ENCODE measurements at regions of chr12 and their contacts with region 1.

Region 1: DNA sequence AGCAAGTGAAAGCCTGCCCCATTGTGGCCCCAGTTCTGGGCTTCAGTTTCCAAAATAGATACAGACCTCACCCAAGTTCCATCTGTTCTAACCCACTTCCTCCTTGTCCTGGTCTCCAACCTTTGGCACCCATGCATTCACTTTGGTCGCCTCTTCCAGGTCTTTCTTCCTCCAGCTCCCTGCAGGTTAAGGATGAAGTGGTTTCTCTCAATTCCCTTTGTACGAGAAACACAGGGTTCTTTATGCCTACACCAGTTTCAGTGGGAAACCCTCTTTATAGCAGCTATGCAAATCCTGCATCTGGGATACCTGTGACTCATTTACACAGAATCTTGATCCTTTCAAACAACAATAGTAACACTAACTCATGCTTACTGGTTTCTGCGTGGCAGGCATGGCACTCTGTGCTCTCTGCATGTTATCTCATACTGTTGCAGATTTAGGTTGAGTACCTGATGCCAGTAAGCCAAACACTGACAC is 110.6 kb upstream of the AMIGO2 start:
- DNase-seq: no peak
- H3K4me3 ChIP-seq: peak overlapping the region; percentile 11
- H3K4me3 Mint-ChIP-seq: peak overlapping the region; percentile 12 to 90 (median 59)
- H3K27ac ChIP-seq: no peak overlapping the region
- H3K27ac Mint-ChIP-seq: peak overlapping the region; percentile 93 to 97 (median 96)
- H3K4me1 ChIP-seq: peaks cover 81% of the 10 kb centered on the region
- H3K4me1 Mint-ChIP-seq: peaks cover 78 to 92% (median 89%) of the 10 kb centered on the region in 3 donors
- H3K27me3 ChIP-seq: no peaks in the 10 kb centered on the region
- H3K27me3 Mint-ChIP-seq: peaks cover 0 to 2% of the 10 kb centered on the region in 2 donors

Region 2: DNA sequence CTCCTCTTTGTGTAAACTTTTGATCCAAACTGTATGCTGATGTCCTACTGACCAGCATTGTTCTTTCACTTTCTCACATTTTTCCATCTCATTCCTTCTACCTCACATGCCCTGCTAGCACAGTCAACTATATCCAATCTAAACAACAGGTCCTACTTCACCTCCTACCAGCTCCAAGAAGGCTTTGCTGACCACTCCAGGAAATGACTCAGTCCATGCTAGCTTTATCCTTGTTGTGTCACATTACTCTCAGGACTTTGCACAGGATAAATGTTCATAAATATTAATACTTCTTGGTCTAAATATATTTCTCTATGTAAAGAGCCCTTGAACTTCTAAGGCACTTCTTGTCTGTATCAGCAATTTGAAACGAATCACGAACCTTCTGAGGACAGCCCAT is 175.8 kb before region 1 on chr12:
- CTCF ChIA-PET with region 1: no interaction called
- POLR2A ChIA-PET with region 1: no interaction called
- DNase-seq: no peak
- H3K4me3 ChIP-seq: no peak overlapping the region
- H3K4me3 Mint-ChIP-seq: no peak overlapping the region
- H3K27ac ChIP-seq: no peak overlapping the region
- H3K27ac Mint-ChIP-seq: no peak overlapping the region
- H3K4me1 ChIP-seq: no peaks in the 10 kb centered on the region
- H3K4me1 Mint-ChIP-seq: no peaks in the 10 kb centered on the region
- H3K27me3 ChIP-seq: peaks cover 6% of the 10 kb centered on the region
- H3K27me3 Mint-ChIP-seq: peaks cover 13 to 56% of the 10 kb centered on the region in 2 donors

Region 3: GRCh38 chr12:47054659-47055058 is 135.7 kb before region 1 on chr12:
- CTCF ChIA-PET with region 1: no interaction called
- POLR2A ChIA-PET with region 1: no interaction called
- DNase-seq: no peak
- H3K4me3 ChIP-seq: no peak overlapping the region
- H3K4me3 Mint-ChIP-seq: no peak overlapping the region
- H3K27ac ChIP-seq: no peak overlapping the region
- H3K27ac Mint-ChIP-seq: no peak overlapping the region
- H3K4me1 ChIP-seq: no peaks in the 10 kb centered on the region
- H3K4me1 Mint-ChIP-seq: no peaks in the 10 kb centered on the region
- H3K27me3 ChIP-seq: no peaks in the 10 kb centered on the region
- H3K27me3 Mint-ChIP-seq: peaks cover 0 to 14% of the 10 kb centered on the region in 2 donors

Region 4: DNA sequence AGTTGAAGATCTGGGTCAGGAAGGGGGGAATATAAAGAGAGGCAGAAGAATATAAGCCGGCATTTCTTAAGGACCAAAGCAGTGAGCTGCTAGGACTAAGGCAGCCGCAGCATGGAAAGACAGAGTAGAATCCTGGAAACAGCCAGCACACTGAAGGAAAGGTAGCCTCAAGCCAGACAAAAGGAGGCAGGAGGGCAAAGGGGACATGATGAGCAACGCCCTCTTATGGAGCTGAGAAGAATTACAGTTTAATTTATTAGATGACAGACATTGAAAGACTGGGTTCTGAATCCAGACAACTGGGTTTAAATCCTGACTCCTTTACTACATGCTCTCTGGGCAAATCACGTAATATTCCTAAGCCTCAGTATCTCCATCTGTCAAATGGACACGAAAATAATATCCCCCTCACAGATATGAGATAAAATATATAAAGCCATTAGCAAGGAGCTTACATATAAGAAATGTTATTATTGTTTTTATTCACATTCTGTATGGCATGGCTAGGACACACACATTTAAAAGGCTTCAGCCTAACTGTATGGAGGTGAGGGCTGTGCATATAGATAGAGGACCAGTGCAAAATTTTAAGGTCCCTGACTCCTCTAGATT is 119.0 kb before region 1 on chr12:
- CTCF ChIA-PET with region 1: interaction called, 14 read pairs
- POLR2A ChIA-PET with region 1: interaction called, 6 read pairs
- DNase-seq: peak in 1 of 5 donors; percentile 31
- H3K4me3 ChIP-seq: no peak overlapping the region
- H3K4me3 Mint-ChIP-seq: no peak overlapping the region
- H3K27ac ChIP-seq: no peak overlapping the region
- H3K27ac Mint-ChIP-seq: peak overlapping the region in 1 of 8 donors; percentile 53
- H3K4me1 ChIP-seq: peaks cover under 1% of the 10 kb centered on the region
- H3K4me1 Mint-ChIP-seq: peaks cover 5 to 10% (median 10%) of the 10 kb centered on the region in 3 donors
- H3K27me3 ChIP-seq: no peaks in the 10 kb centered on the region
- H3K27me3 Mint-ChIP-seq: no peaks in the 10 kb centered on the region

Region 5: GRCh38 chr12:47207340-47207717 is 17.0 kb after region 1 on chr12:
- CTCF ChIA-PET with region 1: interaction called, 31 read pairs
- POLR2A ChIA-PET with region 1: interaction called, 12 read pairs
- DNase-seq: peak; percentile 34 to 60 (median 50)
- H3K4me3 ChIP-seq: peak overlapping the region; percentile 44
- H3K4me3 Mint-ChIP-seq: peak overlapping the region; percentile 58 to 95 (median 78)
- H3K27ac ChIP-seq: peak overlapping the region; percentile 21
- H3K27ac Mint-ChIP-seq: peak overlapping the region; percentile 86 to 98 (median 94)
- H3K4me1 ChIP-seq: peaks cover 67% of the 10 kb centered on the region
- H3K4me1 Mint-ChIP-seq: peaks cover 77 to 90% (median 84%) of the 10 kb centered on the region in 3 donors
- H3K27me3 ChIP-seq: no peaks in the 10 kb centered on the region
- H3K27me3 Mint-ChIP-seq: peaks cover 0 to 2% of the 10 kb centered on the region in 2 donors

Region 6: DNA sequence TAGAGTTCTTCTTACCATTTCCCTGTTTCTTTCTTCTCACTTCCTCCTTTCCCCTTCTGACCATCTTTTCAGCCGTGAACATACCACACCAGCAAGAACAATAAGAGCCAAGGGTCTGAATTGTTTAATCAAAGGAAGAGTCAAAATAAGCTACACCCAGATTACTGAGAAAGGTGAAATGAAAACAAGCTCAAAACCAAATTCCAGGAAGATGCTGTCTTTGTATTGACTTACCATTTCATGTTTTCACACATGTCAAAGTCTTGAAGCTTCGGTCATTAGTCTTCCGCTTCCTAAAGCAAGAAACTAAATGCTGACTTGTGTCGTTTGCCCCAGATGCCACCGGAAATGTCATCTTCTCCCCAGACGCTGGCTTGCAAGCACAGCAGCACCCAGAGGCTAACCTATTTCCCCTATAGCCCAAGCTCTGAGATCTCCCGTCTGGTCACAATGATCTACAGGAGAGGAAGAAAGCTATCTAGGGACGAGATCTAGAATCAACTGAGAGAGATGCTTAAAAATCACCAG is 25.9 kb after region 1 on chr12:
- CTCF ChIA-PET with region 1: interaction called, 31 read pairs
- POLR2A ChIA-PET with region 1: interaction called, 13 read pairs
- DNase-seq: peak; percentile 50 to 84 (median 75)
- H3K4me3 ChIP-seq: peak overlapping the region; percentile 92
- H3K4me3 Mint-ChIP-seq: peak overlapping the region; percentile 89 to 95 (median 94)
- H3K27ac ChIP-seq: peak overlapping the region; percentile 85
- H3K27ac Mint-ChIP-seq: peak overlapping the region; percentile 87 to 100 (median 94)
- H3K4me1 ChIP-seq: peaks cover 8% of the 10 kb centered on the region
- H3K4me1 Mint-ChIP-seq: peaks cover 17 to 43% (median 37%) of the 10 kb centered on the region in 3 donors
- H3K27me3 ChIP-seq: no peaks in the 10 kb centered on the region
- H3K27me3 Mint-ChIP-seq: peaks cover 0 to 2% of the 10 kb centered on the region in 2 donors